Ovary (tissue), 10 donors: ENCODE measurements at regions of chr14 and their contacts with region 1.

Region 1: DNA sequence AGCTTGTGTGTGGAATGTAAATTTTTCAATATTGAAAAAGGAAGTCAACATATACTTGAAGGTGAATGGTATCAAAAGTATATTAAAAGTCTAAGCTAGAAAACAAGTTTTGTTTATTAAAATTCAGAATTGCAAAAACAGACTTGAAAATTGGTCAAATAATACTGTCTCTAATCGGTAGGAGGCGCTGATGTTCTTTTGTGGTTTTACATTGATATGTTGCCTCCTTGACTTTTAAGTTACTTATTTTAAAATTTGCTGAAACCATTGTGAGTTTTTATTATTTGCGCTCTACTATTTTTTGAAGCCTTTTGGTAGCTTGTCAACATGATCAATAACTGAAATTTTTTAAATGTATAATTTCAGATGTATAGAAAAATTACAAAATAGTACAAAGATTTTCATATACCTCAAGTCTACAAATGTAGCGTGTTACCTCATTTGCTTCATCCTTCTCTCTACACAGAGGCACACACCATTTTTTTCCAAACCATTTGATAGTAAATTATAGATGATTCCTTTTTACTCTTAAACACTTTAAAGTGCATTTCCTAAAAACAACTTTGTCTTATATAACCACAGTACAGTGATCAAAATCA is 6.9 kb downstream of the RTRAF start:
- DNase-seq: no peak
- H3K4me3 ChIP-seq: no peak overlapping the region
- H3K27ac ChIP-seq: no peak overlapping the region
- H3K4me1 ChIP-seq: no peaks in the 10 kb centered on the region
- H3K27me3 ChIP-seq: no peaks in the 10 kb centered on the region
- CTCF ChIP-seq: peak; percentile 45 to 75 (median 55)
- EP300 ChIP-seq: no peak
- POLR2A ChIP-seq: no peak

Region 2: GRCh38 chr14:51963286-51963685 is 33.0 kb before region 1 on chr14:
- intact Hi-C with region 1: no loop called
- DNase-seq: no peak
- H3K4me3 ChIP-seq: peak overlapping the region; percentile 7
- H3K27ac ChIP-seq: no peak overlapping the region
- H3K4me1 ChIP-seq: peaks cover 1% of the 10 kb centered on the region
- H3K27me3 ChIP-seq: no peaks in the 10 kb centered on the region
- CTCF ChIP-seq: no peak
- EP300 ChIP-seq: no peak
- POLR2A ChIP-seq: no peak

Region 3: GRCh38 chr14:52131640-52132320 is 135.5 kb after region 1 on chr14:
- intact Hi-C with region 1: loop called in 3 of 4 experiments (anchors 5 kb)
- DNase-seq: peak; percentile 81 to 90 (median 85)
- H3K4me3 ChIP-seq: no peak overlapping the region
- H3K27ac ChIP-seq: no peak overlapping the region
- H3K4me1 ChIP-seq: peaks cover 2% of the 10 kb centered on the region
- H3K27me3 ChIP-seq: no peaks in the 10 kb centered on the region
- CTCF ChIP-seq: peak; percentile 62 to 79 (median 70)
- EP300 ChIP-seq: no peak
- POLR2A ChIP-seq: no peak

Region 4: GRCh38 chr14:52146504-52146903 is 150.3 kb after region 1 on chr14:
- intact Hi-C with region 1: no loop called
- DNase-seq: no peak
- H3K4me3 ChIP-seq: no peak overlapping the region
- H3K27ac ChIP-seq: no peak overlapping the region
- H3K4me1 ChIP-seq: peaks cover 4% of the 10 kb centered on the region
- H3K27me3 ChIP-seq: no peaks in the 10 kb centered on the region
- CTCF ChIP-seq: no peak
- EP300 ChIP-seq: no peak
- POLR2A ChIP-seq: no peak